Caco-2 (cell line): ENCODE measurements at regions of chr10 and their contacts with region 1.

Region 1: GRCh38 chr10:82969405-82969804 is 1094.4 kb downstream of the NRG3 start:
- DNase-seq: peak in 1 of 2 experiments; percentile 18
- H3K4me3 ChIP-seq: no peak overlapping the region
- H3K4me3 Mint-ChIP-seq: no peak overlapping the region
- H3K27ac Mint-ChIP-seq: no peak overlapping the region
- H3K4me1 ChIP-seq: no peaks in the 10 kb centered on the region
- H3K4me1 Mint-ChIP-seq: no peaks in the 10 kb centered on the region
- H3K27me3 ChIP-seq: no peaks in the 10 kb centered on the region
- H3K27me3 Mint-ChIP-seq: no peaks in the 10 kb centered on the region
- CTCF ChIP-seq: peak; percentile 19 to 34

Region 2: DNA sequence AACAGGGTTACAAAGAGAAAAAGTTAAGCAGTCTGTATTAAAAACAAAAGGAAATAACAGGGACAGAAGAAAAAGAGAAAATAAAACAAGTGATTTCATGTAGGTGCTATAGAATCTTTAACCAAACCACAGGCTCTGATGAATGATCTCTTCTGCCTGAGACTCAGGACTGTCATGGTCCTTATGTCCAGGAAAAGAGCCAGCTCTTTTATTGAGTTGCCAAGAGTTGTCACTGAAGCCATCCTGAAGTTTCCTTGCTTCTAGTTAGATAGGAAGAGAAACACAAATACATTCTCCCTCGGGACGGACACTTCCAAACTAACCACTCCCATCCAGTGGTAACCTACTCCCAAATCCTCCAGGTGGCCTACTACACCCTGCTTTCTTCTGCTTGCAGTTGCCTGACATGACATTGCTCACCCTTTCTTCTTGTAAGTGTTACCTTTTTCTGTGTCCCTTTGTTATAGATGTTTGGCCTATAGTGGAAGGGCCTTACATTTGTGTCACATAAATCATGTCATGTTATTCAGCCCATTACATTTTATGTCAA is 747.7 kb before region 1 on chr10:
- CTCF ChIA-PET with region 1: no interaction called
- POLR2A ChIA-PET with region 1: no interaction called
- intact Hi-C with region 1: loop called (anchors 2 kb)
- DNase-seq: peak; percentile 32 to 38
- H3K4me3 ChIP-seq: no peak overlapping the region
- H3K4me3 Mint-ChIP-seq: no peak overlapping the region
- H3K27ac Mint-ChIP-seq: no peak overlapping the region
- H3K4me1 ChIP-seq: no peaks in the 10 kb centered on the region
- H3K4me1 Mint-ChIP-seq: no peaks in the 10 kb centered on the region
- H3K27me3 ChIP-seq: no peaks in the 10 kb centered on the region
- H3K27me3 Mint-ChIP-seq: no peaks in the 10 kb centered on the region
- CTCF ChIP-seq: peak in 1 of 2 experiments; percentile 48

Region 3: DNA sequence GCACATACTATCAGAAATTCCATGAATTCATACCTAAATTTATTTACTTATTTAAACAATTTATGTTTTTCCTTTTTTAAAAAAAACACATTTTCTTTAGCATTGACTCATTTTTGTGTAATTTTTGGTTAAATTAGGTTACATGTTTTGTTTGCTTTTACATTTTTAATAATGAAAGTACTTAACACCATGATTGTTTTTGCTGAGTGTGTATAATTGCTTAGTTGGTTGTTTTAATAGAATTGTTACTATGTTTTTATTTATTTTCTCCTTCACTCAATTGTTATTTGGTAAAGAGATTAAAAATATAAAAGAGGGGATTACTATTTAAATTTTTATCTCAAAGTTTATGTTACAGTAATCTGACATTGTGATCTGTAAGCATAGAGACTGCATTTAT is 586.1 kb before region 1 on chr10:
- CTCF ChIA-PET with region 1: no interaction called
- POLR2A ChIA-PET with region 1: no interaction called
- intact Hi-C with region 1: loop called (anchors 10 kb)
- DNase-seq: no peak
- H3K4me3 ChIP-seq: no peak overlapping the region
- H3K4me3 Mint-ChIP-seq: no peak overlapping the region
- H3K27ac Mint-ChIP-seq: no peak overlapping the region
- H3K4me1 ChIP-seq: no peaks in the 10 kb centered on the region
- H3K4me1 Mint-ChIP-seq: no peaks in the 10 kb centered on the region
- H3K27me3 ChIP-seq: no peaks in the 10 kb centered on the region
- H3K27me3 Mint-ChIP-seq: no peaks in the 10 kb centered on the region
- CTCF ChIP-seq: no peak

Region 4: DNA sequence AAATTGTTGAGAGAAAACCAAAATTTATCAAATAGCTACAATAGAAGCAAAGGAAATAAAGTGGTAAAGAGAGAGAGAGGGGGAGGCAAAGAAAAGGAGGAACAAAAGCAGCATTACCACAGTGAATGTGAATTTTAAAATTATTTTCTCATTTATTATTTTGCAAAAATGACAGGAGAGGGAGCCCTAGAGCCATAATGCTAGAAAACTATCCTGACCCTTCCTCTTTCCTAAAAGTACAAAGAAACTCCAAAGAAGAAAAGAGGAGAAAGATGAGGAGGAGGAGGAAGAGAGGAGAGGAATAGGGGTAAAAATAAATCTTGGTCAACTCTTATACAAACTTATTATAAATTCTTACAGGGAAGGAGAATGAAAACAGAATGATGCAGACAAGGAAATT is 172.9 kb before region 1 on chr10:
- CTCF ChIA-PET with region 1: interaction called, 9 read pairs
- POLR2A ChIA-PET with region 1: no interaction called
- intact Hi-C with region 1: loop called (anchors 1 kb)
- DNase-seq: no peak
- H3K4me3 ChIP-seq: no peak overlapping the region
- H3K4me3 Mint-ChIP-seq: no peak overlapping the region
- H3K27ac Mint-ChIP-seq: no peak overlapping the region
- H3K4me1 ChIP-seq: no peaks in the 10 kb centered on the region
- H3K4me1 Mint-ChIP-seq: peaks cover 8% of the 10 kb centered on the region
- H3K27me3 ChIP-seq: no peaks in the 10 kb centered on the region
- H3K27me3 Mint-ChIP-seq: no peaks in the 10 kb centered on the region
- CTCF ChIP-seq: peak; percentile 37 to 40

Region 5: DNA sequence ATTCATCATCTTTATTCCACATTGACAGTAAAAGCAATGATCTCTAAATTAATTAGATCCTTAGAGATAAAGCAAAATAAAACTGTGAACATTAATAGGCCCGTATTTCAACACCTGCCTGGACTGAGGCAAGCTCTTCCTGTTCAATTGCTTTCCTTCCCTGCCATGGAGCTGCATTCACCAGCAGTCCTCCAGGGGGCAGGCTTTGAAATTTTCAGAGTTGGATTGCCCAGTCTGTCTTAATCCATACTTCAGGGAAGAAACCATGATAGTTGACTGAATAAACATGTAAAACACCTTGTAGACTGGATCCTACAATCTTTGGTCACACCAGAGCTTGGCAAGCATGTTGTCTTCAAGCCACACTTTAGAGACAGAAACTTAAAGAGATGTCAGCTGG is 157.8 kb before region 1 on chr10:
- CTCF ChIA-PET with region 1: interaction called, 7 read pairs
- POLR2A ChIA-PET with region 1: no interaction called
- intact Hi-C with region 1: loop called (anchors 5 kb)
- DNase-seq: peak in 1 of 2 experiments; percentile 42
- H3K4me3 ChIP-seq: no peak overlapping the region
- H3K4me3 Mint-ChIP-seq: no peak overlapping the region
- H3K27ac Mint-ChIP-seq: no peak overlapping the region
- H3K4me1 ChIP-seq: peaks cover 10% of the 10 kb centered on the region; the same call in 1 of the 2 replicates
- H3K4me1 Mint-ChIP-seq: peaks cover 16% of the 10 kb centered on the region
- H3K27me3 ChIP-seq: no peaks in the 10 kb centered on the region
- H3K27me3 Mint-ChIP-seq: no peaks in the 10 kb centered on the region
- CTCF ChIP-seq: peak; percentile 36 to 51

Region 6: DNA sequence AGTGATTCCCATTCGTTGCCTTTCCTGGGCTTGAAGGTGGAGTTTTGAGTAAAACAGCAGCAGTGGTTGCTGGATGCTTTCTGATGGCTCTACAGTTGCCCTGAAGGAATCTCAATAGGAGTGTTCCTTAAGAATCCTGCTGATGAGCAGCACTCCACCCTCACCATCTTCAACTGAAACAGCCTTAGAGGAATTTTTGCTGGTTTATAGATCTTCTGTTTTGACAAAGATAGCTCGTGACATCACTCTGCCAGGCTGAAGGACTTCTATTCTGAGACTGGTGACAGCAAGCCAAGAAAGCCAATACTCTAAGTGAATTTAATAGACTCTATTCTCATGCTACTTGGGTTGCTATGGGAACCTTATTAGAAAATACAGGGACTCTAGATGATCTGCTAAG is 79.7 kb before region 1 on chr10:
- CTCF ChIA-PET with region 1: no interaction called
- POLR2A ChIA-PET with region 1: no interaction called
- intact Hi-C with region 1: no loop called
- DNase-seq: no peak
- H3K4me3 ChIP-seq: no peak overlapping the region
- H3K4me3 Mint-ChIP-seq: no peak overlapping the region
- H3K27ac Mint-ChIP-seq: no peak overlapping the region
- H3K4me1 ChIP-seq: no peaks in the 10 kb centered on the region
- H3K4me1 Mint-ChIP-seq: no peaks in the 10 kb centered on the region
- H3K27me3 ChIP-seq: no peaks in the 10 kb centered on the region
- H3K27me3 Mint-ChIP-seq: no peaks in the 10 kb centered on the region
- CTCF ChIP-seq: no peak

Region 7: DNA sequence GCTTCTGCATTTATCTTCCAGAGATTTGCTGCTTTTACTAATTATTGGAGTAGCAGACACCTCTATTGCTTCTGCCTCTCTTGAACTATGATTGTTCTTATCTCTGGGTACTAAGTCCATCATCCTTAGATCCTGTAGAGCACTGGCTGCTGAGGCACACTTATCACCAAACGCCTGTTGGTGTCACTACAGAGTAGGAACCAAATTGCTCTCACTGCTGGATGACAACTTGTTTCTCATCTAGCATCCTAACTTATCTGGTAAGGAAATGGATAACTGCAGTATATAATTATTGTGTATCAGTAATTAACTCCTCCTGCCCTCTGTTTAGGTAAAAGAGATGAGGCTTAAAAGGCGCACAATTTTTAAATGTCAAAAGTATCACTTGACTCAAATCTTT is 35.0 kb before region 1 on chr10:
- CTCF ChIA-PET with region 1: no interaction called
- POLR2A ChIA-PET with region 1: no interaction called
- intact Hi-C with region 1: loop called (anchors 1 kb)
- DNase-seq: peak; percentile 53 to 55
- H3K4me3 ChIP-seq: no peak overlapping the region
- H3K4me3 Mint-ChIP-seq: no peak overlapping the region
- H3K27ac Mint-ChIP-seq: no peak overlapping the region
- H3K4me1 ChIP-seq: peaks cover 4% of the 10 kb centered on the region; the same call in 1 of the 2 replicates
- H3K4me1 Mint-ChIP-seq: peaks cover 8% of the 10 kb centered on the region
- H3K27me3 ChIP-seq: no peaks in the 10 kb centered on the region
- H3K27me3 Mint-ChIP-seq: no peaks in the 10 kb centered on the region
- CTCF ChIP-seq: peak; percentile 47 to 59